ENCODE measurements at regions of chr10 and their contacts with region 1.

Region 1: GRCh38 chr10:119305860-119306513 is 98.6 kb downstream of the GRK5 start:
- DNase-seq: peak; percentile 81
- ATAC-seq: peak; percentile 85
- H3K4me3 ChIP-seq: peak overlapping the region; percentile 69
- H3K27ac ChIP-seq: peak overlapping the region; percentile 92
- H3K4me1 ChIP-seq: peaks cover 78% of the 10 kb centered on the region
- H3K27me3 ChIP-seq: no peaks in the 10 kb centered on the region
- CTCF ChIP-seq: no peak
- EP300 ChIP-seq: peak; percentile 22 to 29; a peak in 1 of 4 replicates
- POLR2A ChIP-seq: peak; percentile 65
- RAD21 ChIP-seq: 0 out of 2 replicates have a peak, but pooled peaks have one; percentile 5

Region 2: DNA sequence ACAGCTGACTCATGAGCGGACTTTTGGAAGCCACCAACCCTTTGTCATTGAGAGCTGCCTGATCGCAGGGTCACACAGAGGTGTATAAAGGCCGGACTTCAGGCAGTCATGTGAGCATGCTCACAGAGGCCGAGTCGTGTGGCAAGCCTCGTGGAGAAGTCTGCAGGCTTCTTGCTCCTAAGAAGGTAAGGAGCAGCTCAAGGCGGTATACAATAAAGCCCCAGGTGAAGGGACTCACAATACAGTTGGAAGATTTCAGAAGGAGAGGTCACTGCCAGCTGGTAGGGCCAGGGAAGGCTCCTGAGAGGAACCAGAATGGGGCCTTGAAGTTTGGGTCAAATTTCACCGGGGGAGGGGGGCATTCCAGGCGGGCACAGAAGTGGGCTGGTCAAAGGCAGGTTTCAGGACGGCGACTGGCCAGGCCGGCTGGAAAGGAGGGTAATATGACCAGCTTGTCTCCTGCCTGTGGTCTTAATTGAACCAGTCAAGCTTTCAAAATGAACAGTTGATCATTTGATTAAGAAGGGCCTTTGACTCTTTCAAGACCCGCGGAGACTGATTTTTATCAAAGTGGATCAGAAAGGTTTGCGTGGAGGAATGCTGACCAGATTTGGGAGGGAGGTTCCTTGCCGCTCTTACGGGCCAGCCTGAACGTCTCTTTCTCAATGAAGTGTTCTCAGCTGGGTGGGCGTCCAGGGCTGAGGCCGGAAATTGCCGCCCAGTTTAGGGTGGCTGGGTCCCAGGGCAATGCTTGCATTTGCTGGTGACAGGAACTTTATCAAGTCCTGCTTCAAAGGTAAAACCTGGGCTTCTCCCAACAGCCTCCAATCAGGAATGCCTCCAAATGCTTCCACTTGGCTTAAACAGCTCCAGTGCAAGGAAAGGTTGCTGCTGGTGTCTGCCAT is 1584.8 kb before region 1 on chr10:
- CTCF ChIA-PET with region 1: no interaction called
- POLR2A ChIA-PET with region 1: no interaction called
- RAD21 ChIA-PET with region 1: no interaction called
- SMC1A ChIA-PET with region 1: no interaction called
- in situ Hi-C with region 1: no loop called
- intact Hi-C with region 1: no loop called
- DNase-seq: no peak
- ATAC-seq: no peak
- H3K4me3 ChIP-seq: no peak overlapping the region
- H3K27ac ChIP-seq: no peak overlapping the region
- H3K4me1 ChIP-seq: no peaks in the 10 kb centered on the region
- H3K27me3 ChIP-seq: peaks cover 2 to 4% of the 10 kb centered on the region in 2 experiments; a peak in 2 of 4 replicates
- CTCF ChIP-seq: no peak
- EP300 ChIP-seq: no peak
- POLR2A ChIP-seq: no peak
- RAD21 ChIP-seq: no peak

Region 3: GRCh38 chr10:118927321-118927720 is 378.7 kb before region 1 on chr10:
- CTCF ChIA-PET with region 1: no interaction called
- POLR2A ChIA-PET with region 1: no interaction called
- RAD21 ChIA-PET with region 1: no interaction called
- SMC1A ChIA-PET with region 1: no interaction called
- in situ Hi-C with region 1: no loop called
- intact Hi-C with region 1: no loop called
- DNase-seq: no peak
- ATAC-seq: no peak
- H3K4me3 ChIP-seq: no peak overlapping the region
- H3K27ac ChIP-seq: no peak overlapping the region
- H3K4me1 ChIP-seq: no peaks in the 10 kb centered on the region
- H3K27me3 ChIP-seq: no peaks in the 10 kb centered on the region; a peak in 1 of 4 replicates
- CTCF ChIP-seq: no peak
- EP300 ChIP-seq: no peak
- POLR2A ChIP-seq: no peak
- RAD21 ChIP-seq: no peak

Region 4: GRCh38 chr10:119227825-119228224 is 78.2 kb before region 1 on chr10:
- CTCF ChIA-PET with region 1: no interaction called
- POLR2A ChIA-PET with region 1: no interaction called
- RAD21 ChIA-PET with region 1: no interaction called
- SMC1A ChIA-PET with region 1: no interaction called
- in situ Hi-C with region 1: no loop called
- intact Hi-C with region 1: no loop called
- DNase-seq: no peak
- ATAC-seq: no peak
- H3K4me3 ChIP-seq: no peak overlapping the region
- H3K27ac ChIP-seq: no peak overlapping the region
- H3K4me1 ChIP-seq: peaks cover under 1% of the 10 kb centered on the region
- H3K27me3 ChIP-seq: no peaks in the 10 kb centered on the region
- CTCF ChIP-seq: no peak
- EP300 ChIP-seq: no peak
- POLR2A ChIP-seq: no peak
- RAD21 ChIP-seq: no peak

Region 5: GRCh38 chr10:119270762-119271366 is 35.1 kb before region 1 on chr10:
- CTCF ChIA-PET with region 1: interaction called, 4 read pairs
- POLR2A ChIA-PET with region 1: interaction called, 14 read pairs
- RAD21 ChIA-PET with region 1: interaction called, 8 read pairs
- SMC1A ChIA-PET with region 1: interaction called, 10 read pairs
- in situ Hi-C with region 1: no loop called
- intact Hi-C with region 1: loop called (anchors 1 kb)
- DNase-seq: no peak
- ATAC-seq: peak; percentile 85
- H3K4me3 ChIP-seq: peak overlapping the region; percentile 21; the same call in 1 of the 2 replicates
- H3K27ac ChIP-seq: peak overlapping the region; percentile 48
- H3K4me1 ChIP-seq: peaks cover 47% of the 10 kb centered on the region
- H3K27me3 ChIP-seq: no peaks in the 10 kb centered on the region
- CTCF ChIP-seq: no peak
- EP300 ChIP-seq: no peak
- POLR2A ChIP-seq: peak; percentile 64; the same call in 1 of the 2 replicates
- RAD21 ChIP-seq: no peak

Region 6: GRCh38 chr10:119416855-119417254 is 110.9 kb after region 1 on chr10:
- CTCF ChIA-PET with region 1: interaction called, 5 read pairs
- POLR2A ChIA-PET with region 1: no interaction called
- RAD21 ChIA-PET with region 1: interaction called, 4 read pairs
- SMC1A ChIA-PET with region 1: interaction called, 3 read pairs
- in situ Hi-C with region 1: no loop called
- intact Hi-C with region 1: loop called (anchors 2 kb)
- DNase-seq: peak; percentile 15
- ATAC-seq: peak; percentile 97
- H3K4me3 ChIP-seq: no peak overlapping the region
- H3K27ac ChIP-seq: no peak overlapping the region
- H3K4me1 ChIP-seq: no peaks in the 10 kb centered on the region
- H3K27me3 ChIP-seq: no peaks in the 10 kb centered on the region
- CTCF ChIP-seq: peak; percentile 84 to 90 (median 85)
- EP300 ChIP-seq: no peak
- POLR2A ChIP-seq: no peak
- RAD21 ChIP-seq: peak; percentile 93

Measured in GM12878 (cell line).